Cardiac septum (tissue), 1 donor: ENCODE measurements at regions of chr3 and their contacts with region 1.

Region 1: DNA sequence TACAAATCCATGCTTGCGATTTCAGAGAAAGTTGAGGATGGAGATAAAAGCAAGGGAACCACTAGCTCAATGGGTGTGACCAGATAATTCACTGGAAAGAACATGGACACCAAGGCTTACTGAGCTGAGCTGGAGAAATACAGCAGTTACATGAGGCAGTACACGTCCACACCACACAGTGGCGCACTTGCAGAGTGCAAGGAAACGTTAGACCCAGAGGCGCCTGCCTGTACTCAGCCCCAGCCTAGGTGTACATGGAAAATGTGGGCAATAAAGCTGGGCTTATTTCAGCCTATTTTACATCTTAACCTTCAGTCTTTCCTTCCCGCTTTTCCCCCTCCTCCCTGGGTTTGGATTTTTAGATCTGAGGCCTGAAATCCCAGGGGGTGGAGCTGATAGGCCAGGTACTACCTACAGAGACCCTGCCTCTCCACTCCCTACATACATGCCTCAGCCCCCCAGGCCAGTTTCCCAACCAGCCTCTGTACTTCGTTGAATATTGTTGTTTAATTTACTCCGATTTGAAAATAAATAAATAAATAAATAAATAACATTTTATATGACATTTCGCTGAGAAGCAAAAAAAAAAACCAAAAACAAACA is 60.1 kb downstream of the PCOLCE2 start:
- DNase-seq: peak; percentile 89

Region 2: DNA sequence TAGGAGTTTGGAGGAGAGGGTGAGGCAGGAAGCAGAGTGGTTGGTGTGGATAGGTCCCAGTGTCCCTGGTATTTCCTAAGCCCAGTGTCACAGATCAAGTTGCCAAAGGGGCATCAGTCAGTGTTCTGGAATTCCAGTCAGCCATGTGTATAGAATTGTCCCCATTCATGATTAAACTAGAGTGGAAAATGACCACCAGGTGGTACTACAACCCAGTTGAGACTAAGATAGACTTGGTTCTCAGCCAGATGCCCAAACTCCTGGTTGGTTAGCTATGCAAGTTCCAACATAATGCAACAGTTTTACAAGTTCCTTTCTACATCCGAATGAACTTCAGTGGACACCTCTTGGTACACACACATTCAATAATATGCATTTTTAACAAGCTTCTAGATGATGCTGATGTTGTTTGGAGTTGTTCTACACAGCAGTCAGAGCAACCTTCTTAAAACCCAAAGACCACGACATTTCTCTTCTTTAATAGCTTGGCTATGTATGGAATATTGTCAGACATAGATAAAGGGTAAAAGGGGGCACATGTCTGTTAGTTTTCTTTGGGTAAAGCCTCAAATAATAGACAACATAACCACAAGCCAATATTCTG is 241.9 kb before region 1 on chr3:
- intact Hi-C with region 1: loop called (anchors 10 kb)
- DNase-seq: no peak

Region 3: DNA sequence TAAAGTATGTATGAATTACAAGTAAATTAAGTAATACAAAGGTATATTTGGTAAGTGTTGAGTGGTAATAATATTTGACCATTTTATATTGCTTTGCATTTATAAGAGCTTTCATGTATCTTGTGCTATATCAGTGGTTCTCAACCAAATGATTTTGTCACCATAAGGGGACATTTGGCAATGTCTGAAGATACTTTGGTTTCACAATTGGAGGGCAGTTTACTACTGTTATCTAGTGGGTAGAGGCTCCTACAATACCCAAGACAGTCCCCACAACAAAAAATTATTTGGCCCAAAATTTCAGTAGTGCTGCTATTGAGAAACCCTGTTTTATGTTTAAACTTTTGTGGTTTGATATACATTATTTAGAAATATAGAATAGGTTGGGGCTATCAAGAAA is 90.4 kb before region 1 on chr3:
- intact Hi-C with region 1: no loop called
- DNase-seq: no peak

Region 4: GRCh38 chr3:142857056-142857455 is 28.3 kb after region 1 on chr3:
- intact Hi-C with region 1: no loop called
- DNase-seq: no peak

Region 5: GRCh38 chr3:142929109-142929508 is 100.3 kb after region 1 on chr3:
- intact Hi-C with region 1: loop called (anchors 5 kb)
- DNase-seq: no peak